Activated T-helper 1 cell treated with anti-CD3 and anti-CD28 coated beads, Interleukin-12 subunit alpha, Interleukin-12 subunit beta, Interleukin-2, Interleukin-4 antibody, amounts not matched to agents 30 ng/mL and 10 ng/mL and 1 ng/mL, durations not matched to agents 14 hours and 24 hours and 36 hours (primary cell): ENCODE measurements at regions of chr14 and their contacts with region 1.

Region 1: DNA sequence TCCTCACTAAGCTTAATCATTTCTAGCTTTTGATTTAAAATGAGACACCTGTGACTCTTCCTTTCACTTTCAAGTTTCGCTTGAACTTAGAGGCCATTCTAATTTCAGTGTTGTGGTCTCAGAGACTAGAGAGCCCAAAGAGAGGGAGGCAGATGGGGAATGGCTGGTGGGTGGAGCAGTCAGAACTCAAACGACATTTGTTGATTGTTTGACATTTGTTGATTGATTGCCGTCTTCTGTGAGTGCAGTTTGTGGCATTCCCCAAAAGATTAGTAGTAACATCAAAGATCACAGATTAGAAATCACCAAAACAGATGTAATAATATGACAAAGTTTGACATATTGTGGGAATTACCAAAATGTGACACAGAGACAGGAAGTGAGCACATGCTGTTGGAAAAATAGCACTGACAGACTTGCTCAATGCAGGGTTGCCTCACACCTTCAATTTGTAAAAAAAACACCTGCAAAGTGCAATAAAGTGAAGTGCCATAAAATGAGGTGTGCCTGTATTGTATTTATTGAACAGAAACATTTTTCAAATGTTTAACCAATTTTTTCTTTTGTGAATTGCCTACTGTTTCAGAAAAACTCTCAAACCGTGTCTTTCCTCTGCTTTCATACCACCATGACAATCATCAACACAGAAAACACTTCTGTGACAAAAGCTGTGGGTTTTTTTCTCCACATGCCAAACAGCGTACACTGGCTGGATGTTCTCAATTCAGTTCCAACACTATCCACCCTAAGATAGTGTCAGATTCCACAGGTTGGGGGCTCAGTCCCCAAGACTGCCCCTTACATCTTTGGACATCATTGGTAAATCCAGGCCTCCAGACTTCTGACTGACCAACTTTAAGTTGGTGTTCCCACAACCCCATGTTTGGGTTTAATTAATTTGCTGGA is 376.3 kb upstream of the RGS6 start:
- DNase-seq: peak; percentile 60
- H3K4me3 Mint-ChIP-seq: peak overlapping the region; percentile 55
- H3K27ac Mint-ChIP-seq: peak overlapping the region; percentile 96
- H3K4me1 Mint-ChIP-seq: peaks cover 77% of the 10 kb centered on the region
- H3K27me3 Mint-ChIP-seq: no peaks in the 10 kb centered on the region

Region 2: GRCh38 chr14:71021347-71022014 is 534.4 kb before region 1 on chr14:
- intact Hi-C with region 1: loop called (anchors 5 kb)
- DNase-seq: no peak
- H3K4me3 Mint-ChIP-seq: no peak overlapping the region
- H3K27ac Mint-ChIP-seq: peak overlapping the region; percentile 80
- H3K4me1 Mint-ChIP-seq: peaks cover 33% of the 10 kb centered on the region
- H3K27me3 Mint-ChIP-seq: no peaks in the 10 kb centered on the region

Region 3: DNA sequence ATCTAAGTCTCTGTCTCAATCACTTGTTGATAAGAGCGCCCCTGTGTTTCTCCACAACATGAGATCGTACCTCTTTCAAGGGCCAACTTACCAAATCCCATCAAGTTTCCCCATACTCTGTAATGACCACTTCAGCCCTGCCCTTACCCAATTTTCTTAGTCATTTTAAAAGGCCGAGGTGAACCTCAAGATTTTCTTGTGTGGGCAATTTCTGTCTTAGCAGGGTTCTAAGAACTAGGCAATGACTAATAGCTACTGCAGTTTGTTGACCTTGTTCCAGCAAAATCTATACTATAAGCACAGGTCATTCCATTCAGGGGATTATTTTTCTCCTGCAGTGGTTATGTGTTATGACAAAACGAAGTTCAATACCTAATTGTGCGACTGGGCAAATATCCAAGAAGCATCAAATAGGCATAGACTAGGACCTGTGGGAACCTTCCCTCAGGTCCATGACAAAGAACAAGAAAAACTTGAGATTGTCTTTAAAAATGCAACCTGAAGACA is 288.8 kb before region 1 on chr14:
- intact Hi-C with region 1: loop called (anchors 1 kb)
- DNase-seq: no peak
- H3K4me3 Mint-ChIP-seq: peak overlapping the region; percentile 60
- H3K27ac Mint-ChIP-seq: peak overlapping the region; percentile 80
- H3K4me1 Mint-ChIP-seq: peaks cover 52% of the 10 kb centered on the region
- H3K27me3 Mint-ChIP-seq: no peaks in the 10 kb centered on the region

Region 4: GRCh38 chr14:71331403-71331802 is 224.5 kb before region 1 on chr14:
- intact Hi-C with region 1: loop called (anchors 1 kb)
- DNase-seq: no peak
- H3K4me3 Mint-ChIP-seq: peak overlapping the region; percentile 42
- H3K27ac Mint-ChIP-seq: peak overlapping the region; percentile 89
- H3K4me1 Mint-ChIP-seq: peaks cover 71% of the 10 kb centered on the region
- H3K27me3 Mint-ChIP-seq: no peaks in the 10 kb centered on the region

Region 5: GRCh38 chr14:71478542-71478941 is 77.4 kb before region 1 on chr14:
- intact Hi-C with region 1: loop called (anchors 1 kb)
- DNase-seq: no peak
- H3K4me3 Mint-ChIP-seq: peak overlapping the region; percentile 63
- H3K27ac Mint-ChIP-seq: peak overlapping the region; percentile 87
- H3K4me1 Mint-ChIP-seq: peaks cover 55% of the 10 kb centered on the region
- H3K27me3 Mint-ChIP-seq: no peaks in the 10 kb centered on the region

Region 6: GRCh38 chr14:71591929-71592328 is 36.0 kb after region 1 on chr14:
- intact Hi-C with region 1: loop called (anchors 1 kb)
- DNase-seq: no peak
- H3K4me3 Mint-ChIP-seq: no peak overlapping the region
- H3K27ac Mint-ChIP-seq: peak overlapping the region; percentile 37
- H3K4me1 Mint-ChIP-seq: peaks cover 73% of the 10 kb centered on the region
- H3K27me3 Mint-ChIP-seq: no peaks in the 10 kb centered on the region